Breast epithelium (tissue), 4 donors: ENCODE measurements at regions of chr17 and their contacts with region 1.

Region 1: GRCh38 chr17:4480929-4481898 is 17.5 kb upstream of the SPNS2 start:
- DNase-seq: no peak
- H3K4me3 ChIP-seq: no peak overlapping the region
- H3K27ac ChIP-seq: peak overlapping the region; percentile 68
- H3K4me1 ChIP-seq: peaks cover 4 to 26% of the 10 kb centered on the region in 2 donors
- H3K27me3 ChIP-seq: no peaks in the 10 kb centered on the region
- CTCF ChIP-seq: no peak
- POLR2A ChIP-seq: no peak

Region 2: GRCh38 chr17:2792366-2793169 is 1688.6 kb before region 1 on chr17:
- intact Hi-C with region 1: loop called (anchors 5 kb)
- DNase-seq: no peak
- H3K4me3 ChIP-seq: no peak overlapping the region
- H3K27ac ChIP-seq: no peak overlapping the region
- H3K4me1 ChIP-seq: no peaks in the 10 kb centered on the region
- H3K27me3 ChIP-seq: peaks cover 0 to 12% of the 10 kb centered on the region in 2 donors
- CTCF ChIP-seq: no peak
- POLR2A ChIP-seq: no peak

Region 3: GRCh38 chr17:4366327-4367063 is 114.7 kb before region 1 on chr17 and contains the start of gene UBE2G1:
- intact Hi-C with region 1: no loop called
- DNase-seq: peak; percentile 97 to 99
- H3K4me3 ChIP-seq: peak within 1 kb of the TSS; percentile 88 to 100 (median 100)
- H3K27ac ChIP-seq: peak within 1 kb of the TSS; percentile 96
- H3K4me1 ChIP-seq: peaks cover 0 to 4% of the 10 kb centered on the region in 2 donors
- H3K27me3 ChIP-seq: no peaks in the 10 kb centered on the region
- CTCF ChIP-seq: peak in 1 of 3 donors; percentile 19
- POLR2A ChIP-seq: peak; percentile 47
- total RNA-seq, gene UBE2G1: 43.3 to 56.5 (median 43.4) TPM

Region 4: DNA sequence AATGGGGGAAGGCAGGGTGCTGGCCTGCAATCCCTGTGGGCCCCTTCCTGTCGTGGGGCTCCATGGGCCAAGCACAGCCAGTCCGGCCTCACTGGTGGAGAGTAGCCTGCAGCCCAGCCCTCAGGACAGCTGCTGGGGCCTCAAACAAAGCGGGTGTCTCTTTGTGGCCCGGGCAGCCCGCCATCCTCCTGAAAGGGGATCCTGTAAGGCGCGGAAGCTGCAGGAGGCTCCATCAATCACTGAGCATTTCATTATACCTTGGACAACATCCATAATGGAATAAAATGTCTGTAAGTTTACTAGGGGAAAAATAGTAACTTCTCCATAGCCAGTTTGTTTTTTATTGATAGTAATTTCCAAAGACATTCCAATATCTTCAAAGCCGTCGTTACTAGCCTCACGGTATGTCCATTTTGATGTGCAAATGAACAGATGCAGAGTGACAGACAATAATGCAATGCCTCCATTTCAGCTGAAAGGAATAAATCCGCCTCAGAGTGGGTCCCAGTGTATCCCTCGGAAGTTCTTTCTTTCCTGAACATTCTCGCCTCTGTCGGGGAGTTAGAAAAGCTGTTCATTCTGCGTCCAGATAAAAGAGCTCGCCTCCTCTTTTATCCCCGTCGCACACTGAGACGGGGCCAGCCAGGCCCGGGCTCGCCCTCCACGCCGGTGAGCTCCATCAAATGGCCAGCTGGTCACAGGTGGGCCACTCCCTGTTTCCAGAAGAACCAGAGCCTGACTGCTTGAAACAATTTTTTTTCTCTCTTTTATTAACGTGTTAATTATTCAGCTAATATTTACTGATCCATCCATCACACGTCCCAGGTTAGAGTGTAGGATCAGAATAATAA is 1603.3 kb after region 1 on chr17:
- intact Hi-C with region 1: no loop called
- DNase-seq: no peak
- H3K4me3 ChIP-seq: no peak overlapping the region
- H3K27ac ChIP-seq: no peak overlapping the region
- H3K4me1 ChIP-seq: no peaks in the 10 kb centered on the region
- H3K27me3 ChIP-seq: peaks cover 0 to 17% of the 10 kb centered on the region in 2 donors
- CTCF ChIP-seq: no peak
- POLR2A ChIP-seq: no peak